ENCODE measurements at regions of chr1 and their contacts with region 1.

Region 1: GRCh38 chr1:115595279-115596079 is 46.3 kb upstream of the VANGL1 start:
- DNase-seq: peak; percentile 80
- H3K4me3 Mint-ChIP-seq: no peak overlapping the region
- H3K27ac Mint-ChIP-seq: no peak overlapping the region
- H3K4me1 Mint-ChIP-seq: no peaks in the 10 kb centered on the region
- H3K27me3 Mint-ChIP-seq: no peaks in the 10 kb centered on the region
- CTCF ChIP-seq: peak; percentile 66

Region 2: DNA sequence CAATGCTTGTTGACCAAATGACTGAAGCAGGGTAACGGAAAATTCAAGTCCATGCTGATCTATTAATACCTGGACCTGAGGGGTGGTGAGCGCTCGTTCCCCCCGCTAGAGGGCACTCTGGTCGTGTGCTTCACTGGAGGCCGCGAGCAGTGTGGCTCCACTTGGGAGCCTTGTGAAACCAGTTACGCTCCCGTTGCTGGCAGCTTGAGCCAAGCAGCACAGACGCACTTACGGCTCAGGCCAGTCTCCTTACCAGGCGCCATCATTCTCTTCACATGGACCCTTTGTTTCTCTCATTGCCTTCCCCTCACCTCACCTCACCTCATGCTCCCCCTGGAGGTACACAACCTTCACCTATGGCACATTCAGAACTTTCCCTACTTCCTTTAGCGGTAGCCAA is 456.5 kb before region 1 on chr1:
- CTCF ChIA-PET with region 1: no interaction called
- intact Hi-C with region 1: loop called (anchors 5 kb)
- DNase-seq: peak; percentile 80
- H3K4me3 Mint-ChIP-seq: no peak overlapping the region
- H3K27ac Mint-ChIP-seq: no peak overlapping the region
- H3K4me1 Mint-ChIP-seq: peaks cover 21% of the 10 kb centered on the region
- H3K27me3 Mint-ChIP-seq: peaks cover 14% of the 10 kb centered on the region
- CTCF ChIP-seq: peak; percentile 67

Region 3: GRCh38 chr1:115545791-115546733 is 49.4 kb before region 1 on chr1:
- CTCF ChIA-PET with region 1: interaction called, 3 read pairs
- intact Hi-C with region 1: loop called (anchors 1 kb)
- DNase-seq: peak; percentile 73
- H3K4me3 Mint-ChIP-seq: peak overlapping the region; percentile 32
- H3K27ac Mint-ChIP-seq: peak overlapping the region; percentile 80
- H3K4me1 Mint-ChIP-seq: no peaks in the 10 kb centered on the region
- H3K27me3 Mint-ChIP-seq: no peaks in the 10 kb centered on the region
- CTCF ChIP-seq: peak; percentile 47